CD8-positive, alpha-beta memory T cell (primary cell): ENCODE measurements at regions of chr11 and their contacts with region 1.

Region 1: DNA sequence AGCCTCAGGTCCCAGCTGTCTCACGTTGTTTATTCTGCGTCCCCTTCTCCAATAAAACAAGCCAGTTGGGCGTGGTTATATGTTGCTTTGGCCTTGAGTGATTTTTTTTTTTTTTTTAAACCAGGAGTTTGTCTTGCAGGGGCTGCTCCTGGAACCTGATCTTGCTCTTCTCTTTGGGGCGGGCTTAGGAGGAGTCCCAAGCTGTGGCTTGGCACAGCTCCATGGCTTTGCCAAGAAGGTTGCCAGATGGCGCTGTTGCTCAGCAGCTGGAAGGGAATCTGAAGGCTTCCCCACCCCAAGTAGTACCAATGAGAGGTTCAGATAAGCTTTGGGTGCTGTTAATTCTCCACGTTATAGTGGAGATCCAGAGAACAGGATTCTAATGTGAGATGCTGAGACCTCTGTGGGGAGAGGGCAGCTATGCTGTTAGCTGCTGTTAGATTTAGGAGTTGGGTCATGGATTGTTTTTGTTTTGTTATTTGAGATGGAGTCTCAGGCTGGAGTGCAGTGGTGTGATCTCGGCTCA is 2.0 kb upstream of the FERMT3 start:
- DNase-seq: peak; percentile 75 to 92 (median 79)
- H3K4me3 ChIP-seq: no peak overlapping the region
- H3K4me3 Mint-ChIP-seq: peak overlapping the region; percentile 61 to 98 (median 84)
- H3K27ac ChIP-seq: no peak overlapping the region
- H3K27ac Mint-ChIP-seq: peak overlapping the region; percentile 62 to 99 (median 95)
- H3K4me1 ChIP-seq: peaks cover 39% of the 10 kb centered on the region
- H3K4me1 Mint-ChIP-seq: peaks cover 16 to 55% (median 31%) of the 10 kb centered on the region in 3 donors
- H3K27me3 ChIP-seq: no peaks in the 10 kb centered on the region
- H3K27me3 Mint-ChIP-seq: no peaks in the 10 kb centered on the region

Region 2: GRCh38 chr11:63945477-63946163 is 258.9 kb before region 1 on chr11:
- CTCF ChIA-PET with region 1: no interaction called
- POLR2A ChIA-PET with region 1: no interaction called
- DNase-seq: peak; percentile 14 to 61 (median 45)
- H3K4me3 ChIP-seq: no peak overlapping the region
- H3K4me3 Mint-ChIP-seq: no peak overlapping the region
- H3K27ac ChIP-seq: no peak overlapping the region
- H3K27ac Mint-ChIP-seq: peak overlapping the region in 2 of 8 donors; percentile 8 to 32
- H3K4me1 ChIP-seq: no peaks in the 10 kb centered on the region
- H3K4me1 Mint-ChIP-seq: peaks cover 13 to 22% (median 22%) of the 10 kb centered on the region in 3 donors
- H3K27me3 ChIP-seq: no peaks in the 10 kb centered on the region
- H3K27me3 Mint-ChIP-seq: no peaks in the 10 kb centered on the region

Region 3: GRCh38 chr11:64185816-64186498 is 18.6 kb before region 1 on chr11 and contains the start of gene STIP1:
- CTCF ChIA-PET with region 1: interaction called, 34 read pairs
- POLR2A ChIA-PET with region 1: interaction called, 53 read pairs
- DNase-seq: peak; percentile 96 to 100 (median 99)
- H3K4me3 ChIP-seq: peak within 1 kb of the TSS; percentile 76
- H3K4me3 Mint-ChIP-seq: peak within 1 kb of the TSS in 5 of 7 donors; percentile 89 to 100 (median 94)
- H3K27ac ChIP-seq: peak within 1 kb of the TSS; percentile 76
- H3K27ac Mint-ChIP-seq: peak within 1 kb of the TSS; percentile 83 to 99 (median 96)
- H3K4me1 ChIP-seq: peaks cover 31% of the 10 kb centered on the region
- H3K4me1 Mint-ChIP-seq: peaks cover 28 to 48% (median 32%) of the 10 kb centered on the region in 3 donors
- H3K27me3 ChIP-seq: no peaks in the 10 kb centered on the region
- H3K27me3 Mint-ChIP-seq: peaks cover 0 to 5% of the 10 kb centered on the region in 2 donors
- total RNA-seq, gene STIP1: 457 to 461 TPM

Region 4: DNA sequence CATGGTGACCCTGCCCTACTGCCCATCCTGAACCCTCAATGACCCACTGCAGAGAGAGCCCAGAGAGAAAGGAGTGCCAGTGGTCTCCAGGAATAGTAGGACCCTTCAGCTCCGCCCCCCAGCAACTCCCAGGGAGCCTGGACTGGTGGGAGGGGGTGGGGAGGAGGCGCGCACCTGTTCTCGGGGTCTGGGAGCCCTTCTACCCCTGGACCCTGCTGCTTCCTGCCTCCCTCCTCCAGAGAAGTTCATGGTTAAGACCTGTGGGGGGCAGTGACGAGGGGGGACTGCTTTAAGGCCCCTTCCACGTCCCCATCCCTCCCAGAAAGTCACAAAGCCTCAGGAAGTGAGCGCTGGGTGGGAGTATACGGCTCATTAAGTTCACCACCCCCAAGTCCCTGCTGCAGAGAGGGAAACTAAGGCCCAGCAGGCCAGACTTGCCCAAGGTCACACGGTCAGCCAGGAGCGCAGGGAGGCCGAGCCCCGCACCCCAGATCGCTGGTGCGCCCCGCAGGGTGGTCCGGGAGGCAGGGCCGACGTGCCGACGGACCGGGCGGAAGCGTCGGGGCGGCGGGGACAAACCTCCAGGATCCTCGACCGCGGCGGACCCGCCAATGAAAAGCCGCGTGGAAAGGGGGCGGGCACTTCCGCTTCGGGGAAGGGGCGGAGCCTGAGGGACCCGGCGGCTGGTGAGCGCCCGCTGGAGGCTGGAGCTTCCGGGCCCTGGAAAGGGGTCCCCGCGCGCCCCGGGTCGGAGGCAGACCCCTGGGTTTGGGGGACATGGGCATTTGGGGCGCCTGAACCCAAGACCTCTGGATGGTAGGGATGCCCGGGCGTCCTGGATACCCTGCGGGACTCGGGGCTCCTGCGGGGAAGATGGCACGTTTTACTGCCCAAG is 21.3 kb after region 1 on chr11 and contains the starts of genes NUDT22 and TRPT1:
- CTCF ChIA-PET with region 1: interaction called, 143 read pairs
- POLR2A ChIA-PET with region 1: interaction called, 69 read pairs
- DNase-seq: peak; percentile 86 to 93 (median 88)
- H3K4me3 ChIP-seq: peak within 1 kb of the TSS; percentile 90
- H3K4me3 Mint-ChIP-seq: peak within 1 kb of the TSS; percentile 90 to 94 (median 92)
- H3K27ac ChIP-seq: peak within 1 kb of the TSS; percentile 88
- H3K27ac Mint-ChIP-seq: peak within 1 kb of the TSS; percentile 89 to 96 (median 93)
- H3K4me1 ChIP-seq: peaks cover 35% of the 10 kb centered on the region
- H3K4me1 Mint-ChIP-seq: peaks cover 30 to 51% (median 31%) of the 10 kb centered on the region in 3 donors
- H3K27me3 ChIP-seq: no peaks in the 10 kb centered on the region
- H3K27me3 Mint-ChIP-seq: no peaks in the 10 kb centered on the region
- total RNA-seq, gene NUDT22: 75.3 to 78.6 TPM
- total RNA-seq, gene TRPT1: 28.3 to 31.5 TPM

Region 5: GRCh38 chr11:64240394-64241174 is 36.1 kb after region 1 on chr11 and contains the start of gene FKBP2:
- CTCF ChIA-PET with region 1: interaction called, 62 read pairs
- POLR2A ChIA-PET with region 1: interaction called, 35 read pairs
- DNase-seq: peak; percentile 97 to 99 (median 99)
- H3K4me3 ChIP-seq: peak within 1 kb of the TSS; percentile 76
- H3K4me3 Mint-ChIP-seq: peak within 1 kb of the TSS; percentile 87 to 97 (median 90)
- H3K27ac ChIP-seq: peak within 1 kb of the TSS; percentile 99
- H3K27ac Mint-ChIP-seq: peak within 1 kb of the TSS; percentile 99 to 100 (median 100)
- H3K4me1 ChIP-seq: peaks cover 36% of the 10 kb centered on the region
- H3K4me1 Mint-ChIP-seq: peaks cover 18 to 62% (median 23%) of the 10 kb centered on the region in 3 donors
- H3K27me3 ChIP-seq: no peaks in the 10 kb centered on the region
- H3K27me3 Mint-ChIP-seq: no peaks in the 10 kb centered on the region
- total RNA-seq, gene FKBP2: 27.9 to 28.4 TPM

Region 6: DNA sequence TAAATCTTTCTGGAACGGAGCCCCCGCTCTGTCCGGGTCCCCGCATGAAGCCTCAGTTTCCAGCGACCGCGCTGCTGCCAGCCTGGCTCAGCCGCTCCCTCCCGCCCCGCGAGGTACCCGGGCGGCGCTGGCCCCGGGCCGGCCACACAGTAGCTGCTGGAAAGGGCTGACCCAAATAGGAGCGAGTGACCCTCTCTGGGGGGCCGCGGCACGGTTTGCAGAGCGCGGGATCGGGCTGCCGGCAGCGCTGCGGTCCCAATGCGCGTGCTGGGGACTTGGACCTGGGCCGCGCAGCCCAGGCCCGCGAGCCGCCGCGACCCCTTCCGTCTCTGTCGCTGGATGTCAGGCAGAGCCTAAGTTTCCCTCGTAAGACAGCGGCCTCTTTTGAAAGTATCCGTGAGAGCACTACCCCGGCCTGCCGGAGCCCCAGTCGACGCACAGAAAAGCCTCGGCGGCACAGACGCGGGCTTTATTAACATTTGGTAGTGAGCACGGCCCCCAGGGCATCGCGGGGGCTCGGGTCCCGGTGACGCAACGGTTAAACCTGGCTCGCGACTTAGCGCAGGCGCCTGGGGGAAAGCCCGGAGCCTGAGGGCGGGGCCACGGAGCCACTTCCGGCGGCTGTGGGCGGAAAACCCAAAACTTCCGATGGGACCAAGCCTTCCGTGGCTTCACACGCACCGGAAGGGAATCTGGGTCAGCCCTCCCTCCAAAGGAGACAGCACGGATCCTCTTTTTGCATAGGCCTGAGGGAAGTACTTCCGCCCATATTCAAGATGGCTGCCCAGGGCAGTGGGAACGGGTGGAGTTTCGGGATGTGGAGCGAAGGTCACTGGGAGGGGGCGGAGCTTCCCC is 65.1 kb after region 1 on chr11:
- CTCF ChIA-PET with region 1: interaction called, 54 read pairs
- POLR2A ChIA-PET with region 1: interaction called, 59 read pairs
- DNase-seq: peak; percentile 95 to 98 (median 98)
- H3K4me3 ChIP-seq: peak overlapping the region; percentile 96
- H3K4me3 Mint-ChIP-seq: peak overlapping the region; percentile 93 to 99 (median 98)
- H3K27ac ChIP-seq: peak overlapping the region; percentile 86
- H3K27ac Mint-ChIP-seq: peak overlapping the region; percentile 96 to 99 (median 98)
- H3K4me1 ChIP-seq: peaks cover 22% of the 10 kb centered on the region
- H3K4me1 Mint-ChIP-seq: peaks cover 19 to 28% (median 20%) of the 10 kb centered on the region in 3 donors
- H3K27me3 ChIP-seq: no peaks in the 10 kb centered on the region
- H3K27me3 Mint-ChIP-seq: peaks cover 0 to 3% of the 10 kb centered on the region in 2 donors

Region 7: GRCh38 chr11:64304316-64305072 is 100.0 kb after region 1 on chr11:
- CTCF ChIA-PET with region 1: interaction called, 281 read pairs
- POLR2A ChIA-PET with region 1: interaction called, 19 read pairs
- DNase-seq: peak; percentile 85 to 94 (median 90)
- H3K4me3 ChIP-seq: peak overlapping the region; percentile 92
- H3K4me3 Mint-ChIP-seq: peak overlapping the region; percentile 90 to 96 (median 94)
- H3K27ac ChIP-seq: peak overlapping the region; percentile 89
- H3K27ac Mint-ChIP-seq: peak overlapping the region; percentile 95 to 98 (median 97)
- H3K4me1 ChIP-seq: peaks cover 35% of the 10 kb centered on the region
- H3K4me1 Mint-ChIP-seq: peaks cover 32 to 49% (median 32%) of the 10 kb centered on the region in 3 donors
- H3K27me3 ChIP-seq: peaks cover 22% of the 10 kb centered on the region
- H3K27me3 Mint-ChIP-seq: peaks cover 19 to 20% of the 10 kb centered on the region in 2 donors

Region 8: DNA sequence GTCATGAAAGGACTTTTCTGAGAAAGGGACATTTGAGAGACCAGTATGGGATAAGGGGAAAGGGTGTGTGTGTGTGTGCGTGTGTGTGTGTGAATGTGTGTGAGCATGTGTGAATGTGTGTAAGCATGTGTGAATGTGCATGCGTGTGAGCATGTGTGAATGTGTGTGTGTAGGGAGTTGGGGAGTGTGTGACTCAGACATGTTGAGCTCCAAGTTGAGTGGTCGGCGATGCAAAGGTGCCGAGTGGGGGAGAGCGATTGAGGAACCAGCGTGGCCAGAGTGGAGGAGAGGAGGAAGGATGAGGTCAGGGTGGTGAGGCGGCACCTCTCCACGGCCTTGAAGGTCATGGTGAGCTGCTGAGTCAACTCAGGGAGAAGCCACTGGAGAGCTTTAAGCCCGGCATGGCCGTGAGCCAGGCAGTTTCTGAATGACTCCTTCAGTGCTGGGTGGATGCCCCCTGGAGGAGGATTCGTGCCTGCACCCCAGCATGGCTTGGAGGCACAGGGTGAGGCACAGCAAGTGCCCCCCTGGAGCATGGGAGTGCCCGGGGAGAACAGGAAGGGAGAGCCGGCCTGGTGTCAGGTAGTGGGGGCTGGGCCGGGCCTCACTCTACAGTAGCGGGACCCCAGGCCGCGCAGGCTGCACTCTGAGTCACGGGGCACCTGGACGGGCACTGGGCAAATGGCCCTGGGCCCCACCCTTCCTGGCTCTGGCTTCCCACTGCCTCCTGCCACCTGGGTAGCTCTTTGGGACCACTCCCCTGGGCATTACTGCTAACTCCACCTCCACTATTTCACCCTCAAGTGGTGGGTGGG is 127.2 kb after region 1 on chr11:
- CTCF ChIA-PET with region 1: interaction called, 41 read pairs
- POLR2A ChIA-PET with region 1: interaction called, 6 read pairs
- DNase-seq: peak; percentile 55 to 82 (median 60)
- H3K4me3 ChIP-seq: no peak overlapping the region
- H3K4me3 Mint-ChIP-seq: peak overlapping the region in 6 of 7 donors; percentile 14 to 70 (median 59)
- H3K27ac ChIP-seq: peak overlapping the region; percentile 38
- H3K27ac Mint-ChIP-seq: peak overlapping the region; percentile 0 to 94 (median 71)
- H3K4me1 ChIP-seq: peaks cover 12% of the 10 kb centered on the region
- H3K4me1 Mint-ChIP-seq: peaks cover 7 to 13% (median 9%) of the 10 kb centered on the region in 3 donors
- H3K27me3 ChIP-seq: no peaks in the 10 kb centered on the region
- H3K27me3 Mint-ChIP-seq: no peaks in the 10 kb centered on the region

Region 9: DNA sequence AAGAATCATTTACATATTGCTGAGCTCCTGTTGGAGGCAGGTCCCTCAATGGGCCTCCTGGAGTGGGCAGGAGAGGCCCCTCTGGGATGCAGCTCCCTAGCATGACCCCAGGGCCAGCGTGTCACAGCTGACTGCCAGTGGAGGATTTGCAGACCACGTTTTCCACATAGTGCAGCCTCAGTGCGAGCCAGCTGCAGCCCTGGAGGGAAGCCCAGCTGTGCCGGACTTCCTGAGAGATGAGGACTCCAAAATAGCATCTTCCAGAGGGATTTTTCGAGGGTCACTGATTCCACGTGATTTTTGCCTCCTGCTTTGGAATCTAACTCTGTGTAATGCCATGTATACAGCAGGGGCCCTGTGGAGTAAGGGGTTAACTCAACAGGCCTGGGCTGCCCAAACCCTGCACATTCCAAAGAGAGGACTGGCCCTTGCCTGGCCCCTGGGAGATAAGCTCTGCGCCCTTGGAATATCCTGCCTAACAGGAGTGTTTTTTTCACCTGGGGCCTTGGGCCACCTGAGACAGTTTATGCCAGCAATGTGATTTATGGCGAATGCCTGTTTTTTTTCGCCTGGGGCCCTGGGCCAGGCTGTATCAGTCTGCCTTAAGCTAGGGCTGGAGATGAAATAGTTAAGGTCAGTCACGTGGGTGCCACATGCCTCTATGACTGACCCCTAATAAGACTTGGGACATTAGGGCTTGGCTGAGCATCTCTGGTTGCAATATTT is 201.9 kb after region 1 on chr11:
- CTCF ChIA-PET with region 1: no interaction called
- POLR2A ChIA-PET with region 1: no interaction called
- DNase-seq: no peak
- H3K4me3 ChIP-seq: no peak overlapping the region
- H3K4me3 Mint-ChIP-seq: no peak overlapping the region
- H3K27ac ChIP-seq: no peak overlapping the region
- H3K27ac Mint-ChIP-seq: no peak overlapping the region
- H3K4me1 ChIP-seq: no peaks in the 10 kb centered on the region
- H3K4me1 Mint-ChIP-seq: no peaks in the 10 kb centered on the region
- H3K27me3 ChIP-seq: no peaks in the 10 kb centered on the region
- H3K27me3 Mint-ChIP-seq: peaks cover 10 to 16% of the 10 kb centered on the region in 2 donors